Natural killer cell (primary cell): ENCODE measurements at regions of chr5 and their contacts with region 1.

Region 1: GRCh38 chr5:108681079-108681921 is 66.4 kb upstream of the FER start:
- DNase-seq: peak in 1 of 2 donors; percentile 71
- ATAC-seq: peak; percentile 79 to 89 (median 88)
- H3K4me3 ChIP-seq: no peak overlapping the region
- H3K4me3 Mint-ChIP-seq: no peak overlapping the region
- H3K27ac ChIP-seq: no peak overlapping the region
- H3K27ac Mint-ChIP-seq: no peak overlapping the region
- H3K4me1 ChIP-seq: no peaks in the 10 kb centered on the region
- H3K4me1 Mint-ChIP-seq: no peaks in the 10 kb centered on the region
- H3K27me3 ChIP-seq: no peaks in the 10 kb centered on the region
- H3K27me3 Mint-ChIP-seq: no peaks in the 10 kb centered on the region
- CTCF ChIP-seq: peak; percentile 71

Region 2: DNA sequence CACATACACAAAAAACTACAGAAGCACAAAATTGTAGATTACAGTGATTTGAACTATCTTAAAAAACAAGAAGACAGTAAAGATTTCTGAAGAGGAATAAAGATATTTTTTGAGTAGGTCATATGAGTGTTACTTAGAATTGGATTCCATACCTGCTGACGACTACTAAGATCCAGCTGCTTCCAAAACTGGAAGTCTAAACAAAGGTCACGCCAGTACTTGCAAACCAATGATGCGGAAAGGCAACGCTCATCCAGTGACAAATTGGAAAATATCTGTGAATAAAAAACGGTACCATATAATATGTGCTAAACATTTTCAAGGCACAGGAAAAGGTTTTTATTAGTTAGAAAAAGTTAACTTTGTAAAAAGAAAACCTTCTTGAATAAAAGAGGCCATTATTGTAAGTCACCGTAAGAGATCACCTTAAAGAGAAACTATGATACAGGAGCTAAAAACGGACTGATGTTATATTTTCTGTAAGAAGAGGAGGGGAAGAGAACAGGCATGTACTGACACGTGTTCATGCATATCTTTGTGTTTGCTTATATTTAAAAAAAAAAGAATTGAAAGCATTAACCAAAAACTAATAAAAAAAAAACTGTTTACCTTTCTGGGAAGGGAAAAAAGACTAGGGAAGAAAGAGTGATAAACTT is 313.5 kb before region 1 on chr5:
- intact Hi-C with region 1: no loop called
- DNase-seq: no peak
- ATAC-seq: no peak
- H3K4me3 ChIP-seq: no peak overlapping the region
- H3K4me3 Mint-ChIP-seq: no peak overlapping the region
- H3K27ac ChIP-seq: no peak overlapping the region
- H3K27ac Mint-ChIP-seq: peak overlapping the region; percentile 20 to 73
- H3K4me1 ChIP-seq: no peaks in the 10 kb centered on the region
- H3K4me1 Mint-ChIP-seq: peaks cover 30 to 36% of the 10 kb centered on the region in 2 donors
- H3K27me3 ChIP-seq: no peaks in the 10 kb centered on the region
- H3K27me3 Mint-ChIP-seq: no peaks in the 10 kb centered on the region
- CTCF ChIP-seq: no peak

Region 3: GRCh38 chr5:108661590-108662219 is 19.6 kb before region 1 on chr5:
- intact Hi-C with region 1: no loop called
- DNase-seq: no peak
- ATAC-seq: no peak
- H3K4me3 ChIP-seq: no peak overlapping the region
- H3K4me3 Mint-ChIP-seq: no peak overlapping the region
- H3K27ac ChIP-seq: no peak overlapping the region
- H3K27ac Mint-ChIP-seq: no peak overlapping the region
- H3K4me1 ChIP-seq: no peaks in the 10 kb centered on the region
- H3K4me1 Mint-ChIP-seq: no peaks in the 10 kb centered on the region
- H3K27me3 ChIP-seq: no peaks in the 10 kb centered on the region
- H3K27me3 Mint-ChIP-seq: peaks cover 9 to 18% of the 10 kb centered on the region in 2 donors
- CTCF ChIP-seq: no peak

Region 4: DNA sequence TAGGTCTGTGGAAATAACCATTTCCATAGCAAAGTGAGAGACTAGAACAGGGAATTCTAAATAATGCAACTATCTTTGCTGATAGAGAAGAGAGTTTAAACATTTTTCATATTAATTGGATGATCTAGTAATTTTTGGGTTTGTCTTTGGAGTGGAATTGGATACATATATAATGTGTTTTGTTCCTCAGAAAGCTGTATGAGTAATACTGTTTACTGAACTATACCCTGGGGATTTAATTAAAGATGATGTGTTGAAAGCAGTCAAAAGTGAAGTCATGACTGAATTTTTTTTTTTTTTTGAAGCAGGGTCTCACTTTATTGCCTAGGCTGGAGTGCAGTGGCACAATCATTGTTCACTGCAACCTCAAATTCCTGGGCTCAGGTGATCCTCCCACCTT is 84.3 kb after region 1 on chr5:
- intact Hi-C with region 1: no loop called
- DNase-seq: no peak
- ATAC-seq: no peak
- H3K4me3 ChIP-seq: no peak overlapping the region
- H3K4me3 Mint-ChIP-seq: no peak overlapping the region
- H3K27ac ChIP-seq: no peak overlapping the region
- H3K27ac Mint-ChIP-seq: no peak overlapping the region
- H3K4me1 ChIP-seq: no peaks in the 10 kb centered on the region
- H3K4me1 Mint-ChIP-seq: peaks cover 15 to 18% of the 10 kb centered on the region in 2 donors
- H3K27me3 ChIP-seq: no peaks in the 10 kb centered on the region
- H3K27me3 Mint-ChIP-seq: no peaks in the 10 kb centered on the region
- CTCF ChIP-seq: no peak

Region 5: DNA sequence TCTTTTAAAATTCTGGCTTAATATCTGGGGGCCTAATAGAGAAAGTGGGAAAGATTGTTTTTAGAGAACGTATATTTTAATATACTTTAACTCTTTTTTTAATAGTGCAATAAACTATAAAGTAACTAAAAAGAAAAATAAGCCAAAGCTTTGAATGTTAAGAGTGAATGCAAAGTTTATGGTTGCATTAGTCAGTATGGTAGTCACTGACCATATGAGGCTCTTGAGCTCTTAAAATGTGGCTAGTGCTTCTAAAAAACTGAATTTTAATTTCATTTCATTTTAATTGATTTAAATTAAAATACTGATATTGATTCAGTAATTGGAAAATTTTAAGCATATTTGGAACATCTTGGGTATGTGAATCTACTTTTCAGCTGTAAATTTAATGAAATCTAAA is 417.8 kb after region 1 on chr5:
- intact Hi-C with region 1: loop called (anchors 10 kb)
- DNase-seq: no peak
- ATAC-seq: no peak
- H3K4me3 ChIP-seq: no peak overlapping the region
- H3K4me3 Mint-ChIP-seq: no peak overlapping the region
- H3K27ac ChIP-seq: no peak overlapping the region
- H3K27ac Mint-ChIP-seq: no peak overlapping the region
- H3K4me1 ChIP-seq: no peaks in the 10 kb centered on the region
- H3K4me1 Mint-ChIP-seq: no peaks in the 10 kb centered on the region
- H3K27me3 ChIP-seq: no peaks in the 10 kb centered on the region
- H3K27me3 Mint-ChIP-seq: no peaks in the 10 kb centered on the region
- CTCF ChIP-seq: no peak

Region 6: DNA sequence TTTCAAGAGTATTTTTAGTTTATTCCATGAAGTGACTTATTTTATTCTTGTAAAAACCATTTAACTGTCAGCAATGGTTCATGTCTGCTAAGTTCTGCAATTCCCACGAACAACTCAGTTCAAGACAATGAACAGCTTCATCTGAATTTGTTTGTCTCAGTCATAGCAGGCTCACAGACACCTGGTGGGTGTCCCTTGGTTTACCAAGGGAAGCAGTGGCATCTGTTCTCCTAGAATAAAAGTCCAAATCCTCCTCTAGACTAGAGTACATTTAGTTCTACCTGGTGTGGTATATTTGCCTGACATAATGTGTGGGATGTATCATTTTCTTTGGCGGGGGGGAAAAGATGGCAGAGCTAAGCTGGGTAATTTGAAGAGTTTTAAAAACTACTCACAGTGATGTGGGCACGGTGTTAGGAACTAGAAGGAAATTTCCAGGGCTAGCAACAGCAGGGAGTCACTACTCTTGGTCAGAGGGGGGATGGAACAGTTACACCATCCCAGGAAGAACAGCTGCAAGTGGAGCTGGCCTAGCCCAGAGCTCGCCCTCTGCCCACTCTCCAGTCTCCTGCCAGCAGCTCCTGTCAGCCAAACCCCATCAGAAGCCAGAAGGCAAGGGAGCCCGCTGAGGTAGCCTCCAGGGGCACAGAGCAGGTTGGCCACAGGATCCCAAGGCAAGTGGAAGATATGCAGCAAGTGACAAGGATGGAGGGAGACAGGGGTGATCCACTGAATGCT is 628.2 kb after region 1 on chr5:
- intact Hi-C with region 1: no loop called
- DNase-seq: no peak
- ATAC-seq: no peak
- H3K4me3 ChIP-seq: no peak overlapping the region
- H3K4me3 Mint-ChIP-seq: no peak overlapping the region
- H3K27ac ChIP-seq: no peak overlapping the region
- H3K27ac Mint-ChIP-seq: no peak overlapping the region
- H3K4me1 ChIP-seq: no peaks in the 10 kb centered on the region
- H3K4me1 Mint-ChIP-seq: no peaks in the 10 kb centered on the region
- H3K27me3 ChIP-seq: no peaks in the 10 kb centered on the region
- H3K27me3 Mint-ChIP-seq: no peaks in the 10 kb centered on the region
- CTCF ChIP-seq: no peak